Gastrocnemius medialis (tissue), 4 donors: ENCODE measurements at regions of chr3 and their contacts with region 1.

Region 1: DNA sequence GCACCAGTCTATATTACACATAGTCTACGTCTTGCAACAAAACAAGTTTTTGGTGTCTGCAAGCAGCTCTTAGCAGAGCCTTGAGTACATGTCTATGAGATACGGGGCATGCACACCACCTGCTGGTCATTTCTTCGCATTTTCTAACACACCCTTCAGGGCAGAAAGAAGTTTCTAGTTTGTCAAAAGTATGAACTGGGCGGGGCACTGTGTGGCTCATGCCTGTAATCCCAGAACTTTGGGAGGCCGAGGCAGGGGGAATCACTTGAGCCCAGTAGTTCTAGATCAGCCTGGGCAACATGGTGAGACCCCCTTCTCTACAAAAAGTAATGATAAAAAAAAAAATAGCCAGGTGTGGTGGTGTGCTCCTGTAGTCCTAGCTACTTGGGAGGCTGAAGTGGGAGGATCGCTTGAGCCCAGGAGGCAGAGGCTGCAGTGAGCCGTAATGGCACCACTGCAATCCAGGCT is 64.2 kb upstream of the ARL8B start:
- DNase-seq: peak; percentile 57 to 79
- ATAC-seq: peak; percentile 73 to 82
- H3K4me3 ChIP-seq: no peak overlapping the region
- H3K27ac ChIP-seq: no peak overlapping the region
- H3K4me1 ChIP-seq: peaks cover 27 to 35% of the 10 kb centered on the region in 2 donors
- H3K27me3 ChIP-seq: no peaks in the 10 kb centered on the region
- CTCF ChIP-seq: peak; percentile 75 to 85 (median 79)
- POLR2A ChIP-seq: no peak

Region 2: GRCh38 chr3:4712143-4712542 is 345.7 kb before region 1 on chr3:
- in situ Hi-C with region 1: loop called (anchors 5 to 10 kb)
- intact Hi-C with region 1: loop called (anchors 1 kb)
- DNase-seq: no peak
- ATAC-seq: no peak
- H3K4me3 ChIP-seq: no peak overlapping the region
- H3K27ac ChIP-seq: no peak overlapping the region
- H3K4me1 ChIP-seq: peaks cover 6 to 9% of the 10 kb centered on the region in 2 donors
- H3K27me3 ChIP-seq: no peaks in the 10 kb centered on the region
- CTCF ChIP-seq: no peak
- POLR2A ChIP-seq: no peak

Region 3: GRCh38 chr3:4826237-4827100 is 231.4 kb before region 1 on chr3:
- in situ Hi-C with region 1: no loop called
- intact Hi-C with region 1: loop called (anchors 5 kb)
- DNase-seq: peak; percentile 75 to 90
- ATAC-seq: peak; percentile 72 to 74
- H3K4me3 ChIP-seq: peak overlapping the region; percentile 12 to 36 (median 23)
- H3K27ac ChIP-seq: peak overlapping the region; percentile 80 to 89 (median 86)
- H3K4me1 ChIP-seq: peaks cover 48 to 67% of the 10 kb centered on the region in 2 donors
- H3K27me3 ChIP-seq: no peaks in the 10 kb centered on the region
- CTCF ChIP-seq: no peak
- POLR2A ChIP-seq: peak; percentile 67 to 83

Region 4: DNA sequence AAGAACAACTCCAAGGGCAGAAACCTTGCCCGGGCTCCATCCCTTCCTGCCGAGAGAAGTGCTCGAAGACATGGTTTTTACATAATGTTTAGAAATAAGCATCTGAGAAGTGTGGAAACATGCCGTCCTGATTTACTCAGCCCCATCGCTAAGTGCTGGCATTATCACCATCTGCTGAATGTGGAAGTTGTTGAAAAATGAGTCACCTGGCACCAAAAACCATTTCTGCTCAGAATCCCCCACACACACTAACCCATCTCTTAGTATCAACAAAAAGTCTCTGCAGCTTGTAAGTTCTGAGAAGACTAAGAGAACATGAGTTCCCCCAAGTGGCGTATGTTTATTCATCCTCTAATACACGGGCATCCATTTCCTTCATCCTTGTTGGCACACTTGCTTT is 13.2 kb after region 1 on chr3:
- in situ Hi-C with region 1: no loop called
- intact Hi-C with region 1: loop called (anchors 2 kb)
- DNase-seq: no peak
- ATAC-seq: no peak
- H3K4me3 ChIP-seq: no peak overlapping the region
- H3K27ac ChIP-seq: no peak overlapping the region
- H3K4me1 ChIP-seq: peaks cover 9 to 10% of the 10 kb centered on the region in 2 donors
- H3K27me3 ChIP-seq: no peaks in the 10 kb centered on the region
- CTCF ChIP-seq: no peak
- POLR2A ChIP-seq: no peak

Region 5: GRCh38 chr3:5787861-5788488 is 730.1 kb after region 1 on chr3:
- in situ Hi-C with region 1: no loop called
- intact Hi-C with region 1: no loop called
- DNase-seq: peak; percentile 4 to 24
- ATAC-seq: peak in 1 of 2 donors; percentile 6
- H3K4me3 ChIP-seq: no peak overlapping the region
- H3K27ac ChIP-seq: no peak overlapping the region
- H3K4me1 ChIP-seq: no peaks in the 10 kb centered on the region
- H3K27me3 ChIP-seq: no peaks in the 10 kb centered on the region
- CTCF ChIP-seq: no peak
- POLR2A ChIP-seq: no peak